SK-MEL-5 (cell line): ENCODE measurements at regions of chr2 and their contacts with region 1.

Region 1: GRCh38 chr2:72579591-72580180 is 246.1 kb downstream of the EXOC6B start:
- DNase-seq: peak; percentile 77

Region 2: DNA sequence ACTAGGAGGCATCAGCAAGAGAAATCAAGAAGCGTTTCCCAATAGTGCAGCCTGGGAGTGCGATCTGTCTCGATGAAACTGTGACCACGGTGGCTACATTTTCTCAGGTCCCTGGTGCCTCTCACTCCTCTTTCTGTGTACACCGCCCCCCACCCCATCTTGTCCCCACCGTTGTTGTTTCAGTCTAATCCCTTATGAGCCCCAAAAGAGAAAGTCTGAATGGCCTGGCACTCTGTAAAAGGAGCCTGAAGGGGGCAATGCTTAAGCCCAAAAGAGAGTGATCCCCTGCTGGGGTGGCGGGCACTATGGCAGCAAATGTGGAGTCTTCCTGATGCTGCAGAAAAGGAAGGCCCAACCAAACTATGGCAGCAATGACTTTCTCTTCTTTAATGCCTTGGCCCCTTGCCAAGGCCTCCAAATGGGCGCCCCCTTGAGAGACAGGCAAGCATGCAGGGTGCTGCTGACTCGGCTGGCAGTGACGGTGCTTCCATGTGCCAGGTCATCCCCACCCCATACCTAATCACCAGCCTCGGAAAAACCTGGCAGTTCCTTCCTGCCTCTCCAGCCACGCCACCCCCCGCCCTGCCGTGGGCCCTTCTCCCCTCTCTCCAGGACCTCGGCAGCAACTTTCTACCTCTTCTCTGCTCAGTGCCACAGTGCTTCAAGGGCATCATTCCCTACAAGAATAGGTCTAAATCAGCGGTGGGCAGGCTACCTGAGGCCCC is 555.1 kb before region 1 on chr2:
- in situ Hi-C with region 1: no loop called
- DNase-seq: no peak

Region 3: DNA sequence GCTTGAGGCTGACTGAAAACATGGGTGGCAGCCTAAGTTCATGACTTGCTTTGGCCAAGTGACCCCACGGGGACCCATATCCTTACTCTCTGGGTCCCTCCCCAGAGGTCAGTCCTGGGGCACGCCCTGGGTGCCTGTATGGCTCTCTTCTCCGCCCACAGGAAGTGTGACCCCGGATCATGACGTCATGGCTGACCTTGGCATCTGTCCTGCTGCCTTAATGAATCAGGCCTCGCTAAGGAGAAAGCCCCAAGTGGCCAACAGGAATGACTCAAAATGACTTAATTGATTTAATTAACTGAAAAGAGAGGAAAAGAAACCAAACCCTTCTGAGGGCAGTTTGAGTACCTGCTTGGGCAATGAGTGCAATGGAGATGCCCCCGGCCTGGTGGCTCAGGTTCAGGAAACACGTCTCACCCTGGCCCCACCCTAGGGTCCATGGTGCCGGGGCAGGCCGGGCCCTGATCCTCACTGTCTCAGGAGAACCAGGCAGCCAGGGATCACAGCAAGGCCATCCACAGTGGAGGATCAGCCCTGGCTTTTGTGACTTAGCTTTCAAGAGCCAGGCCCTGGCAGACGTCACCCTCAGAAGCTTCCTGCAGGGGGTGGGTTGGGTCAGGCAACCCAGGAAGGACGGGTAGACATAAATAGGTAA is 544.0 kb before region 1 on chr2:
- in situ Hi-C with region 1: loop called (anchors 10 kb)
- DNase-seq: no peak

Region 4: GRCh38 chr2:72092111-72092510 is 487.6 kb before region 1 on chr2:
- in situ Hi-C with region 1: no loop called
- DNase-seq: no peak